ENCODE measurements at regions of chr7 and their contacts with region 1.

Region 1: DNA sequence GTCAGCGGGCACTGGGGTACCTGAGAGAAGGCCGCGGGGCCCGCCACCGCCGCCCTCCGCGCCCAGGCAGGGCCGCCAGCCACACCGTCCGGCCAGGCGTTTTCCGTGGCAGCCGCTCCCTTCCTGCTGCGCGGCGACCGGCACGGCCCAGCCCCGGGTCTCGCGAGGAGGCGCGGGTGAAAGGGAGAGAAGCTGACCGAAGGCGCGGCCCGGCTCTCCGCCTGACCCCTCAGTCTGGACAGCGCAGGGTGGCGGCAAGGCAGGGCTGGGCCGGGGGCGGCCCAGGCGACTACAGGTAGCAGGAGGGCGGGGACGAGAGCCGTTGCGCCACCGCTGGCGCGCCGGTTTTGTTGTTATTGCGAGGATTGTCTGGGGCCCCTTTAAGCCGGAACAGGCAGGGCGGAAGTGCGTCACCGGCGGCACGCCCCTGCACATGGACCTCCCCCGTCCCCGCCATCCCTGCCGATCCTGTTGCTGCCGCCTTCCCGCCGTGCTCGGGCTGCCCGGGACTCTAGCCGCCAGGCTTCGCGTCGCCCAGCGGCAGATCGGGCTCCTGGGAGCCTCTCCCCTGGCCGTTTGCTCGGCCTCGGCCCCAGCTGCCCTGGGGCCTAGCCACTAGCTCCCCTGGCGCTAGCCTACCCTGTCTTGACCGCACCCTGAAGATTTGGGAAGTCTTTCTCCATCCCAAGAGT is at the start of gene HERPUD2:
- DNase-seq: peak; percentile 88 to 96 (median 90)
- ATAC-seq: peak; percentile 82
- H3K4me3 ChIP-seq: peak within 1 kb of the TSS; percentile 97
- H3K4me3 Mint-ChIP-seq: peak within 1 kb of the TSS; percentile 99
- H3K27ac ChIP-seq: peak within 1 kb of the TSS; percentile 94 to 96
- H3K27ac Mint-ChIP-seq: peak within 1 kb of the TSS; percentile 99
- H3K4me1 ChIP-seq: peaks cover 16% of the 10 kb centered on the region
- H3K4me1 Mint-ChIP-seq: peaks cover 60% of the 10 kb centered on the region
- H3K27me3 ChIP-seq: no peaks in the 10 kb centered on the region
- H3K27me3 Mint-ChIP-seq: no peaks in the 10 kb centered on the region
- CTCF ChIP-seq: no peak
- total RNA-seq, gene HERPUD2: 113 to 127 TPM

Region 2: GRCh38 chr7:35647171-35647574 is 47.8 kb before region 1 on chr7:
- CTCF ChIA-PET with region 1: no interaction called
- POLR2A ChIA-PET with region 1: no interaction called
- intact Hi-C with region 1: loop called in 1 of 2 experiments (anchors 5 kb)
- DNase-seq: no peak
- ATAC-seq: no peak
- H3K4me3 ChIP-seq: no peak overlapping the region
- H3K4me3 Mint-ChIP-seq: no peak overlapping the region
- H3K27ac ChIP-seq: no peak overlapping the region
- H3K27ac Mint-ChIP-seq: peak overlapping the region; percentile 64
- H3K4me1 ChIP-seq: peaks cover 32% of the 10 kb centered on the region
- H3K4me1 Mint-ChIP-seq: peaks cover 82% of the 10 kb centered on the region
- H3K27me3 ChIP-seq: no peaks in the 10 kb centered on the region
- H3K27me3 Mint-ChIP-seq: no peaks in the 10 kb centered on the region
- CTCF ChIP-seq: no peak

Region 3: GRCh38 chr7:35707422-35707821 is 12.5 kb after region 1 on chr7:
- CTCF ChIA-PET with region 1: interaction called, 6 read pairs
- POLR2A ChIA-PET with region 1: interaction called, 15 read pairs
- intact Hi-C with region 1: loop called in 1 of 2 experiments (anchors 2 kb)
- DNase-seq: no peak
- ATAC-seq: no peak
- H3K4me3 ChIP-seq: no peak overlapping the region
- H3K4me3 Mint-ChIP-seq: no peak overlapping the region
- H3K27ac ChIP-seq: no peak overlapping the region
- H3K27ac Mint-ChIP-seq: no peak overlapping the region
- H3K4me1 ChIP-seq: peaks cover 13% of the 10 kb centered on the region
- H3K4me1 Mint-ChIP-seq: peaks cover 12% of the 10 kb centered on the region
- H3K27me3 ChIP-seq: no peaks in the 10 kb centered on the region
- H3K27me3 Mint-ChIP-seq: no peaks in the 10 kb centered on the region
- CTCF ChIP-seq: no peak

Region 4: DNA sequence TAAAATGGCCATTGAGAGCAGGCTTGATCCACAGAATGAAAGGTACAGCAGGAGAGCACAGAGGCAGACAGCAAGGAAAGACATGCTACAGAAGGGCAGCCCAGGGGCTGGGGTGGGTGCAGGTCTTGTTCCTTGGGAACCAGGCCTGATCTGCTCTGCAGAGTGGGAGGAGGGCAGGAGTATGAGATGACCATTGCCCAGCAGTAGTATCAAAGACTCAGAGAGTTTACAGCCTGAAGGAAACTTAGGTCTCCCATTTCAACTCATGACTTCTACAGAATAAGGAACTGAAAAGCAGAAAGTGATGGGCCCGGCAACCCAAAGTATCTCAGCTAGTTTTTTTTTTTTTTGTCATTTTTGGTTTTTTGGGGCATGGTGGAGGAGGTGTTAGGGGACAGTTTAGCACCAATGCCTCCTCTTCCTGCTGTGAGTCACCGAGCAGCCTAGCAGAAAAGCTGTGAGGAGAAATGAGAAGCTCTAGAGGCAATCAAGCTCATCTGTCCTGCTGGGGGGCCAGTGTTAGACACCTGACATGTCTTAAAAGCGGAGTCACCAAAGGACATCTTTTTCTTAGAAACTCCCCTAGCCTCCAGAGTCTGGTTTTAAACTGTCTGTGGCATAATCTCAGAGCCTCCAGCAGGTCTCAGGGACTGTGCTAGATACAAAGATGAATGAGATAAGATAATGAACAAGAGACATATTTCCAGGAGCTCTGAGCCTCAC is 34.3 kb after region 1 on chr7:
- CTCF ChIA-PET with region 1: interaction called, 6 read pairs
- POLR2A ChIA-PET with region 1: interaction called, 28 read pairs
- intact Hi-C with region 1: loop called in 1 of 2 experiments (anchors 1 kb)
- DNase-seq: peak in 5 of 14 experiments; percentile 7 to 72 (median 57)
- ATAC-seq: no peak
- H3K4me3 ChIP-seq: no peak overlapping the region
- H3K4me3 Mint-ChIP-seq: no peak overlapping the region
- H3K27ac ChIP-seq: peak overlapping the region in 1 of 2 donors; percentile 3
- H3K27ac Mint-ChIP-seq: no peak overlapping the region
- H3K4me1 ChIP-seq: peaks cover 52% of the 10 kb centered on the region
- H3K4me1 Mint-ChIP-seq: peaks cover 57% of the 10 kb centered on the region
- H3K27me3 ChIP-seq: no peaks in the 10 kb centered on the region
- H3K27me3 Mint-ChIP-seq: no peaks in the 10 kb centered on the region
- CTCF ChIP-seq: no peak

Region 5: GRCh38 chr7:36192053-36192824 is 497.3 kb after region 1 on chr7:
- CTCF ChIA-PET with region 1: no interaction called
- POLR2A ChIA-PET with region 1: no interaction called
- intact Hi-C with region 1: no loop called
- DNase-seq: peak in 3 of 14 experiments; percentile 23 to 66 (median 59)
- ATAC-seq: no peak
- H3K4me3 ChIP-seq: no peak overlapping the region
- H3K4me3 Mint-ChIP-seq: no peak overlapping the region
- H3K27ac ChIP-seq: no peak overlapping the region
- H3K27ac Mint-ChIP-seq: no peak overlapping the region
- H3K4me1 ChIP-seq: peaks cover 3% of the 10 kb centered on the region
- H3K4me1 Mint-ChIP-seq: no peaks in the 10 kb centered on the region
- H3K27me3 ChIP-seq: no peaks in the 10 kb centered on the region
- H3K27me3 Mint-ChIP-seq: no peaks in the 10 kb centered on the region
- CTCF ChIP-seq: no peak

Region 6: GRCh38 chr7:36291387-36292316 is 596.7 kb after region 1 on chr7:
- CTCF ChIA-PET with region 1: no interaction called
- POLR2A ChIA-PET with region 1: no interaction called
- intact Hi-C with region 1: loop called in 1 of 2 experiments (anchors 5 kb)
- DNase-seq: peak; percentile 56 to 88 (median 70)
- ATAC-seq: peak; percentile 27
- H3K4me3 ChIP-seq: peak overlapping the region; percentile 26
- H3K4me3 Mint-ChIP-seq: peak overlapping the region; percentile 65
- H3K27ac ChIP-seq: no peak overlapping the region
- H3K27ac Mint-ChIP-seq: peak overlapping the region; percentile 59
- H3K4me1 ChIP-seq: peaks cover 45% of the 10 kb centered on the region
- H3K4me1 Mint-ChIP-seq: peaks cover 46% of the 10 kb centered on the region
- H3K27me3 ChIP-seq: no peaks in the 10 kb centered on the region
- H3K27me3 Mint-ChIP-seq: no peaks in the 10 kb centered on the region
- CTCF ChIP-seq: peak; percentile 96

Measured in CD4-positive, alpha-beta T cell (primary cell).